Panc1 (cell line): ENCODE measurements at regions of chr1 and their contacts with region 1.

Region 1: GRCh38 chr1:212498283-212499040 is 65.7 kb downstream of the NENF start:
- DNase-seq: no peak
- ATAC-seq: no peak
- H3K4me3 ChIP-seq: no peak overlapping the region
- H3K27ac ChIP-seq: no peak overlapping the region
- H3K4me1 ChIP-seq: no peaks in the 10 kb centered on the region
- H3K27me3 ChIP-seq: no peaks in the 10 kb centered on the region
- CTCF ChIP-seq: no peak

Region 2: DNA sequence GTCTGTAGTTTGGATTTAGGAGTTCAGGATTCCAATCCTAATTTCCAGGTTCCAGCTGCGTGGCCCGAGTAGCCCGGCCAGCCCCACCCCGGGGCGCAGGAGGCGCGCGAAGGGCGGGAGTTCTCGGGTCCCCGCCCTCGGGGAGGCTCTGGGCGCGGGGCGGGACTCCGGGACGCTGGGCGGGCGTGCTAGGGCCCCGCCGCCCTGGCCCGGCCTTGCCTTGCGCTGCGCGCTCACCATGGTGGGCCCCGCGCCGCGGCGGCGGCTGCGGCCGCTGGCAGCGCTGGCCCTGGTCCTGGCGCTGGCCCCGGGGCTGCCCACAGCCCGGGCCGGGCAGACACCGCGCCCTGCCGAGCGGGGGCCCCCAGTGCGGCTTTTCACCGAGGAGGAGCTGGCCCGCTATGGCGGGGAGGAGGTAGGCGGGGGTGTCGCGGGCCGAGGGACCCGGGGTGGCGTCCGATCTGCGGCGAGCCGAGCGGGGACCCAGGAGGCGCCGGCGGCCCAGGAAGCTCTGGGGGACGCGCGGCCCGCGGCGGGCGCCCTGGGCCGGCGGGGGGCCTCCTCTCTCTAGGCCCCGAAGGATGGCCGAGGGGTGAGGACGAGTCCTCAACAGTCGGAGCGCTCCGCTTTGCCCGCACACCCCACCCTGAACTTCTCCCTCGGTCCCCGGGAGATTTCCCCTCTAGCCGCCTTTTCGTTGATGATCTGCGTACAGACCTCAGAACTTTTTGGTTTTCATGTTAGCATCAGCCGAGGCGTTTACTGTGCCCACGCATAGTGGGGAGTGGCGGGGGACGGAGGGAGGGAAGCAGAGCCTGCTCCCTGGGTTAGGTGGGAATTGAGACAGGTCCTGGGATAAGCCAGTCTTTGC is 65.5 kb before region 1 on chr1 and contains the start of gene NENF:
- CTCF ChIA-PET with region 1: no interaction called
- POLR2A ChIA-PET with region 1: no interaction called
- in situ Hi-C with region 1: no loop called
- intact Hi-C with region 1: no loop called
- DNase-seq: no peak
- ATAC-seq: peak; percentile 100
- H3K4me3 ChIP-seq: peak within 1 kb of the TSS; percentile 72 to 80
- H3K27ac ChIP-seq: peak within 1 kb of the TSS; percentile 97
- H3K4me1 ChIP-seq: peaks cover 3% of the 10 kb centered on the region; the same call in 1 of the 2 replicates
- H3K27me3 ChIP-seq: no peaks in the 10 kb centered on the region
- CTCF ChIP-seq: no peak
- total RNA-seq, gene NENF: 72.4 TPM

Region 3: GRCh38 chr1:212477014-212477679 is 21.3 kb before region 1 on chr1:
- CTCF ChIA-PET with region 1: interaction called, 13 read pairs
- POLR2A ChIA-PET with region 1: no interaction called
- in situ Hi-C with region 1: no loop called
- intact Hi-C with region 1: no loop called
- DNase-seq: peak; percentile 81
- ATAC-seq: peak; percentile 96
- H3K4me3 ChIP-seq: no peak overlapping the region
- H3K27ac ChIP-seq: no peak overlapping the region
- H3K4me1 ChIP-seq: 0 out of 2 replicates have a peak, but pooled peaks cover 2% of the 10 kb centered on the region
- H3K27me3 ChIP-seq: no peaks in the 10 kb centered on the region
- CTCF ChIP-seq: peak; percentile 95